Dorsolateral prefrontal cortex (tissue), 120 donors: ENCODE measurements at regions of chr3 and their contacts with region 1.

Region 1: DNA sequence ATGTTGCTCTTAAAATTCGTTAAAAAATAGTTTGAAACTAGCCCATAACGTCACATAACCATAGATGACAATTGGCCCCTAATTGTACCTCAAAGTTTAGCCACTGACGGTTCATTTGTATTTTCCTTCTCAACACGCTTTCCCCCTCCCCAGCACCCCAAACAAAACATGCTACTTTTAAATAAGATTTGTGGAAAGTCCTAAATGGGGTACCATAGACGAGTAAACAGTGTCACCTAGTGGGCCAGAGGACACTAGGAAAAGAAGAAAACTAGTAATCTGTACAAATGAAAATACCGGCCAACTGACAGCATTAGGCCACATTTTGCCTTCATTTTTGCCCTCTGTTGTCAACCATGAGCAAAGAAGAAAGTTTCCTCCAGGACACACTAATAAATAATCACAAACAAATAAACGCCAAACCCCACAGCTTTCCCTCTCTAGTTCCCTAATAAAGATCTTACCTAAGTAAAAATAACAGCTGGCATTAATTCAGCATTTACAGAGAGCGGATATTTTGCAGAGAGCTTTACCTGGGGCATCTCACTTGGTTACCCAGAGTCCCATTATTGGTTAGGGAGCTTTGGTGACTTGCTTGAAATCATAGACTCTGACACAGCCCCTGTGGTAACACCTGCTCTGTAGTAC is 175.1 kb upstream of the ATP11B start:
- DNase-seq: peak in 1 of 10 donors; percentile 20
- H3K4me3 ChIP-seq: peak overlapping the region in 37 of 59 donors; percentile 4 to 58 (median 26)
- H3K27ac ChIP-seq: peak overlapping the region in 6 of 59 donors; percentile 2 to 64 (median 24)
- H3K27me3 ChIP-seq: no peaks in the 10 kb centered on the region
- CTCF ChIP-seq: peak; percentile 34 to 88 (median 67)

Region 2: DNA sequence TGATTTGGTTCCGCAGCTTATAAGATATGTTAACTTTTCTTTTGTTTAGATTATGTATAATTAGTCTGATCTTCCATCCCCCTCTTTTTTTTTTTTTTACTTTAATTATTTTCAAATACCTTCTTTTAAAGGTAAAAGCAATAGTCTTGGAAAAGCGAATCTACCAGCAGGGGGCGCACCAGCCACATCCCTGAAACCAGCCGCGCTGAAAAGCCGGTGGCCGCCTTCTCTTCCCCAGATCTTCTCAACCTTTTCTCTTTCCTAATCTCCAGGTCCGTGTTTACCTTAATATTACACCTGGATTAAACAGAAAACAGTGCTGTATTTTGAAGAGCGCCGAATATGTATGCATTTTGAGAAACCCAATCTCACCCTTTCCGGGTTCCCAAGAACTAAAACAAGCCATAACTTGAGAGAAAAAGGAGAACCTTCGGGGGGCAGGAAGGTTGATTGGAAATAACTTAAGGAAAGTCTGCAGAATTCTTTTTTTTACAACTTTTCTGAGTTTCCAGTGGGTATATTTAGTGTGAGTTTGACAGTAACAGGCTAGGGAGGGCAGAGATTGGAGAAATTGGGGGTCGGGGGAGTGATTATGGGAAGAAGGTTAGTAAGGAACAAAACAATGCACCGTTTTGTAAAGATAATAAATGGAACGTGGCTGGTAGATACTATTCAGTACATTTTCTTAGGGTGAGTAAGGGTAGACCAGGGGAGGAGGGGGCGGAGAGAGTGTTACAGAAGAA is 908.5 kb before region 1 on chr3:
- intact Hi-C with region 1: loop called (anchors 5 to 10 kb)
- DNase-seq: peak in 9 of 10 donors; percentile 38 to 85 (median 77)
- H3K4me3 ChIP-seq: peak overlapping the region in 58 of 59 donors; percentile 4 to 93 (median 66)
- H3K27ac ChIP-seq: peak overlapping the region; percentile 7 to 100 (median 94)
- H3K27me3 ChIP-seq: peaks cover 0 to 99% (median 51%) of the 10 kb centered on the region in 45 donors
- CTCF ChIP-seq: peak; percentile 75 to 98 (median 88)

Region 3: DNA sequence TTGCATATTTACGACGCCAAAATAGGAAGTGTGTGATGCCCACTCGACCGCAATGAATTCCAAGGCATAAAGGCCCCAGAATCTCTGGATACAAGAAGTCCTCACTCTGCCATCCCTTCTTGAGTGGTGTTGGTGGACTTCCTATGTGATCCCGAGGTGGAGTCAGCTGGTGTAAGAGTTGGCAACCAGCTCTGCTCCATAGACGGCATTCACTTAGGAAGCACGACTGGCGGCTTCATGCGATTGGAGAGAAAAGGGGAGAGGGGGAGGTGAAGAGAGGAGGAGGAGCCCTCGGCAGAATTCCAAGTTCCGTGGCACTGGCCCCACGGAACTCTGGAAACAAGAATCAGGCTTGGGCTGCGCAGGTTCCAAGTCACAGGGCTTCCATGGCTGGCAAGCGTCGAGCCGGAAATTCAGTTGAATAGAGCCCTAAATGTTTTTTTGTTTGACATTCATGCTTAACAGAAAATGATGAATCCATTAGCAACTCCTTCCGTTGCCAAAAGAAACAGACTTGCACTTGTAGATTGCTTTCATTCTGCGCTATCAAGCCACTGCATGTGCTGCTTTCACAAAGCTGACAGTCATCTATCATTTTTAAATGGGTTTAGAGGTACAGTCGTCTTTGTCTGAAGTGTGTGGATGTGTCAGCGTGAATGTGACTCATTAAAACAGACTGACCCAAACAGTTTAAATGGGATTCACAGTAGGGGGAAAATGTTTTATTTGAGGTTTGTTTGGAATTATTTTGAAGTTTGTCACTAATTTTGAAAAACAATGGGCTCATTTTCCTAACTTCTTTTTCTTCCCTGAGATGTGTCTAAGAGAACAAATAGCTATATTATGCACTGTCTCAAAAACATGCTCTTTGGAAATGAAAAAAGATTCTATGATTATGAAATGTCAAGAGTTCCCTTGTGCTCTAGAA is 253.2 kb before region 1 on chr3:
- intact Hi-C with region 1: loop called in 1 of 2 experiments (anchors 10 kb)
- DNase-seq: peak; percentile 13 to 76 (median 66)
- H3K4me3 ChIP-seq: peak overlapping the region; percentile 0 to 69 (median 47)
- H3K27ac ChIP-seq: peak overlapping the region in 57 of 59 donors; percentile 9 to 91 (median 80)
- H3K27me3 ChIP-seq: peaks cover 0 to 8% (median 0%) of the 10 kb centered on the region in 45 donors
- CTCF ChIP-seq: peak in 13 of 56 donors; percentile 2 to 48 (median 13)

Region 4: DNA sequence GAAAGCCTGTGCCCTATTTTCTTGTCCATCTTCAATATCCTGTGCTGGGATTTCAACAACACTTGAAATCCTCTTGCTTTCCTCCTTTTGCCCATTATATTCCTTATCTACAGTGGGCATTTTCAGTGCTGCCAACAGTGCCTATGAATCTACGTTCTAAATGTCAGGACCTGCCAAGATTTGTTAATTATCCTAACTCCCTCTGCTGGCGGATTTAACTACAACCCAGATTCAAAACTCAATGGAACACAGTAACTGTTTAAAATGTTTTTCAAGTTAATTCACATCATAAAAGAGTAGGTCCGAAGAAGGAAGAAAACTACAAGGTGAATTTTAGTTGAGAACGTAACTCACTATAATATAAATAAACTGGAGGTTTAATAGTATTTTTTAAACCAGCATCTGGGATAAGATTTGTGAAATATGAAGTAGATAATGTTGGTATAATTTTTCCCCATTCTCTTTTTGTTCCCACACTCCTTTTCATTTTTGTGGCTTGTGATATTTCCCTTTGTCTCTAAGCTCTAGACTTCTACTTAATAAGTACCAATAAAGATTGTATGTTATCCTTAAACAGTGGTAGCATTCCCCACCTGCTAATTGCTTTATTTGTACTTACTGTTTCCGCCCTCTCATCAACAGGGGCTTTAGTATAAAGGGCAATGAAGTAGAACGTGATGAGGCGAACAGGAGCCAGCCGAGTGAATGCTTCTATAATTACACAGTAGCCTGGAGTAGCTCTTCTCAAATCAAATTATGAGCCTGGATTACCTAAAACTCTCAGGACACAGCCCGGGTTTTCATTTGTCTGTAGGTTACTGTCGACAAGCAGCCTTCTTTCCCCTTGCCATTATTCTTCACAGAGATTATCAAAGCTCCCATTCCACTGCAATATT is 127.4 kb before region 1 on chr3:
- intact Hi-C with region 1: loop called in 1 of 2 experiments (anchors 10 kb)
- DNase-seq: no peak
- H3K4me3 ChIP-seq: peak overlapping the region in 4 of 59 donors; percentile 1 to 27 (median 6)
- H3K27ac ChIP-seq: peak overlapping the region in 16 of 59 donors; percentile 4 to 73 (median 36)
- H3K27me3 ChIP-seq: no peaks in the 10 kb centered on the region
- CTCF ChIP-seq: peak; percentile 47 to 82 (median 68)

Region 5: GRCh38 chr3:182683453-182683852 is 65.2 kb after region 1 on chr3:
- intact Hi-C with region 1: loop called in 1 of 2 experiments (anchors 2 kb)
- DNase-seq: peak in 9 of 10 donors; percentile 35 to 85 (median 63)
- H3K4me3 ChIP-seq: peak overlapping the region in 58 of 59 donors; percentile 21 to 84 (median 72)
- H3K27ac ChIP-seq: peak overlapping the region in 55 of 59 donors; percentile 12 to 86 (median 75)
- H3K27me3 ChIP-seq: peaks cover 0 to 27% (median 2%) of the 10 kb centered on the region in 45 donors
- CTCF ChIP-seq: peak; percentile 76 to 99 (median 93)

Region 6: GRCh38 chr3:182936239-182936917 is 318.2 kb after region 1 on chr3:
- intact Hi-C with region 1: no loop called
- DNase-seq: no peak
- H3K4me3 ChIP-seq: no peak overlapping the region
- H3K27ac ChIP-seq: peak overlapping the region in 5 of 59 donors; percentile 7 to 15 (median 12)
- H3K27me3 ChIP-seq: no peaks in the 10 kb centered on the region
- CTCF ChIP-seq: no peak